ENCODE measurements at regions of chr10 and their contacts with region 1.

Region 1: GRCh38 chr10:72273410-72274212 is at the start of gene DDIT4:
- DNase-seq: peak; percentile 100
- total RNA-seq, gene DDIT4: 22.6 TPM

Region 2: GRCh38 chr10:72016608-72017312 is 256.9 kb before region 1 on chr10:
- intact Hi-C with region 1: no loop called
- DNase-seq: no peak

Region 3: GRCh38 chr10:72215652-72216549 is 57.7 kb before region 1 on chr10 and contains the starts of genes ANAPC16 and ASCC1:
- intact Hi-C with region 1: loop called (anchors 1 kb)
- DNase-seq: peak; percentile 95
- total RNA-seq, gene ANAPC16: 171 TPM
- total RNA-seq, gene ASCC1: 21.2 TPM

Region 4: DNA sequence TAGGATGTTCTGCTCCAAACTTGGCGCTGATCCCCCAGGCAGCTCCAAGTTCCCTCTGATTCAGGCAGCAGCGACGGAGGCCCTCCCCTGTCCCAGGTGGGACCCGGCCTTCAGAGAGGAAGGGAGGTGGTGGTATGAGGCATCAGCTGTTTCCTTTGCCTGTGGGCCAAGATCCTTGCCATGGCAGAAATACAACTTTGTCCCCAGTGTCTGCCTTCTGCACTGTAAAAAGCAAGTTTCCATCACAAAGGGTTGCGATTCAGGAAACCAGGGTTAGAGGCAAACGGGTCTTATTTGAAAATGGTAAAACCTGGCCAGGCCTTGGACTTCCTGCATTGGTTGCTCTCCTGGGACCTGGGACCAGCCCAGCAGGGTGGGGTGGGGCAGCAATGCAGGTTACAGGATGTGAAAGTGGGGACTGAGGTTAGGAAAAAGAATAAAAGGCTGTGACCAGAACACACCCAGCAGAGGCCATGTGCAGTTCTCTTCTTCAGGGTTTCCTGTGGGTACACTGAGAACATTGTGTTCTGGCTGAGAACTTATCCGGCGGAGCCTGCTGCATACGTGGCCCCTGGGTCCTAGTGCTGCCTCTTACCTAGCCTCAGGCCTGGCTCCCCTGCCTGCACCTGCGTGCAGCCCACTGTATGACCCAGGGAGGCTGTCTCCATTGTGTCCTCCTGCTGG is 25.0 kb before region 1 on chr10:
- intact Hi-C with region 1: loop called (anchors 1 kb)
- DNase-seq: peak; percentile 90

Region 5: DNA sequence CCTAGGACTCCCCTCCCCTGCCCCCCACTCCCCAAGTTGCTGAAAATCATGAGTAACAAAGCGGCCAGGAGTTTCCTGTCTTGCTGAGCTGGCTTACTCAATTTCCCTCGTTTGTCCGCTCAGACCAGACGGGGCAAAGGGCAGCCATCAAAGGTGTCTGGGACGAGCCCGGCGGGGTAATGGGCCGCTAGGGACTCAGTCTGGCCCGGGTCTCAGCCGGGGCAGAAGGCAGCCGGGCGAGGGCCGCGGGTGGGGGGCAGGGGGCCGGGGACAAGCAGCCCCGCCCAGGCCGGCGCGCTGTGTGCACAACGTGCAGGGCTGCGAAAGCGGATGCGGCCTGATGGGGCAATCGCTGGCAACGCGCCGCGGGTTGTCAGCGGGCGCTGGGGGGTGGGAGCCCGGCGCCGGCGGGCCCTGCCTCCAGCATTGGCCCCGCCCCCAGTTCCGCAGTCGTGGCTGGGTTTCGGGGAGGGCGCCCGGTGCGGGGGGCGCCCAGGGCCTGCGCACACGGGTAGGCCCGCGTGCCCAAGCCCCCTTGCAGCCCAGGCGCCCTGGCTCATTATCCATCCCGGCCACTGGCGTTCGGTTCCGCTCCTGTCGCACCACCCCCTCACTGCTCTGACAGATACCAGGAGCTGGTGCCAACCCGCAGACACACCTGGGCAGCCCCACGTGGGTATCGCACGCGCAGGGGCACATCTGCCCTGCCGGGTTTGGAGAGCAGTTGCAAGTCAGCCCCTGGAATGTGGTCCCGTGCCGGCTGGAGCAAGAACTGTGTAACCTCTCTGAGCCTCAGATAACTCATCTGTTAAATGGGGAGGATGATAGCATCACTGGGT is 46.0 kb after region 1 on chr10:
- intact Hi-C with region 1: loop called (anchors 5 kb)
- DNase-seq: peak; percentile 97

Region 6: DNA sequence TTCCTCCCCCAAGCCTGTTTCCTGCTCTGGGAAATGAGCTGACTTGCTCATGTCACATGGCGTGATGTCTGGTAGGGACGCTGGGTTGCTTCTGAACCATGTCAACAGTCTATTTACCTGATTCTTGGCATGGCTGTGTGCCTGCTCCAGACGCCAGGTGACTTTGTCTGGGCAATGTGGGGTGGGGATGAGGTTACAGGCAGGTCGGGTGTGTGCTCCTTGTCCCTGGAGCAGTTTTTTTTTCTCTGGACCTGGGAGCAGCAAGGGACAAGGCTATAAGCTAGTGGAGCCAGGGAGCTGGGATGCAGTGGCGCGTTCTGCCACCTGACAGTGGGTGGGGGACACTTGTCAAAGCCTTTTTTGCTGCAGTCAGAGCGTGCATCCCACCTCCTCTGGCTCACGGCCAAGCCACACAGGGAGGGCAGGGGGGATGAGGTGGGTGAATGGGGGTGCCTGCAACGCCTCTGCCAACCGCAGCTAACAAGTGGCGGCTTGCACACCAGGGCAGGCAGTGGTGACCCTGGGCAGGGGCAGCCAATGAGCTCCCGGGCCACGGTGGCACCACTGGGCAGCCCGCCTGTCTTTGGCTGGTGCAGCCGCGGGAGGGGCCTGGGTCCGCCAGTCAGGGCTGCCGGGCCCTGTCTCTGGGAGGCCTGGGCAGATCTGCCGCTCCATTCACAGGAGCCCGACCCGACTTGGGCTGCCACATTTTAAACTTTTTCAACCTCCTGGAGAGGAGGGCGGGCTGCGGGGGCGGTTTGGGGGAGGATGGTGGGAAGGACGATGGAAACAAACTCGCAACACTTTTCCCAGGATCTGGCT is 58.2 kb after region 1 on chr10:
- intact Hi-C with region 1: loop called (anchors 2 kb)
- DNase-seq: peak; percentile 92

Measured in cardiac septum (tissue), 1 donor.